Aorta (tissue), 5 donors: ENCODE measurements at regions of chrX and their contacts with region 1.

Region 1: GRCh38 chrX:109714340-109714958 is 18.6 kb downstream of the ACSL4 start:
- DNase-seq: no peak
- ATAC-seq: no peak
- H3K4me3 ChIP-seq: no peak overlapping the region
- H3K27ac ChIP-seq: no peak overlapping the region
- H3K4me1 ChIP-seq: peaks cover 0 to 1% of the 10 kb centered on the region in 2 donors
- H3K27me3 ChIP-seq: no peaks in the 10 kb centered on the region

Region 2: GRCh38 chrX:109856974-109857373 is 142.5 kb after region 1 on chrX:
- intact Hi-C with region 1: loop called (anchors 5 kb)
- DNase-seq: no peak
- ATAC-seq: no peak
- H3K4me3 ChIP-seq: no peak overlapping the region
- H3K27ac ChIP-seq: no peak overlapping the region
- H3K4me1 ChIP-seq: no peaks in the 10 kb centered on the region
- H3K27me3 ChIP-seq: no peaks in the 10 kb centered on the region

Region 3: DNA sequence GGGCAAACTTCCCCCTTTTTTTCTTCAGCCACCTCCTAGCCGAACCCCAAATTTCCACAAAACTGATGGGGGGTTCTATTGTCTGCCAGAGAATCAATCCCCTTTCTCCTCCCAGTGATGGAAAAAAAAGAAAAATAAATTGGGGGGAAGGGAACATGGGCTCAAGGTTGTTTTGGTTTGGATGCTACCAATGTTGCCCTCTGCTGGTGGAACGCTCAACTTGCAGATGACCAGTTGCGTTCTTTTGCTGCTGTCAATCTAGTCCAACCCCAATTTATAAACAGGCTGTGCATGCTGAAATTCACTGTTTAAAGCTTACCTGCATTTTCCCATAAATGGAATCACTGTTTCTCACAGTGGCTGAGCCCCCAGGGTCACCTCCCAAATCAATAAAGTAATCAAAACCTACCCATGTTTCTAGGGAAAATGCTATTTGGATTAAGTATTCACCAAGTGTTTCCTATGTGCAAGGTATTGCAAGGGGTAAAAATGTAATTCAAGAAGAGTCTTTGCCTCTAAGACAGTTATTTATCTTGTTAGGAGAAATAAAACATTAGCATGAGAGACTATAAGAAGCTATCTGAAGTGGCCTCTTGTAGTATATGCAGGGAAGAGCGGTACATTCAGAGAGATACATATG is 171.8 kb after region 1 on chrX:
- intact Hi-C with region 1: loop called in 1 of 2 experiments (anchors 5 kb)
- DNase-seq: no peak
- ATAC-seq: no peak
- H3K4me3 ChIP-seq: no peak overlapping the region
- H3K27ac ChIP-seq: no peak overlapping the region
- H3K4me1 ChIP-seq: no peaks in the 10 kb centered on the region
- H3K27me3 ChIP-seq: peaks cover 0 to 1% of the 10 kb centered on the region in 2 donors